ENCODE measurements at regions of chr21 and their contacts with region 1.

Region 1: GRCh38 chr21:31098576-31099005 is 60.3 kb upstream of the KRTAP19-8 start:
- DNase-seq: peak; percentile 54 to 85 (median 73)
- ATAC-seq: peak; percentile 78
- H3K4me3 ChIP-seq: no peak overlapping the region
- H3K4me3 Mint-ChIP-seq: no peak overlapping the region
- H3K27ac ChIP-seq: no peak overlapping the region
- H3K27ac Mint-ChIP-seq: no peak overlapping the region
- H3K4me1 ChIP-seq: no peaks in the 10 kb centered on the region
- H3K4me1 Mint-ChIP-seq: peaks cover 22% of the 10 kb centered on the region
- H3K27me3 ChIP-seq: no peaks in the 10 kb centered on the region
- H3K27me3 Mint-ChIP-seq: no peaks in the 10 kb centered on the region
- CTCF ChIP-seq: peak; percentile 90

Region 2: GRCh38 chr21:31064803-31065202 is 33.8 kb before region 1 on chr21:
- CTCF ChIA-PET with region 1: no interaction called
- POLR2A ChIA-PET with region 1: no interaction called
- intact Hi-C with region 1: no loop called
- DNase-seq: no peak
- ATAC-seq: no peak
- H3K4me3 ChIP-seq: no peak overlapping the region
- H3K4me3 Mint-ChIP-seq: no peak overlapping the region
- H3K27ac ChIP-seq: no peak overlapping the region
- H3K27ac Mint-ChIP-seq: no peak overlapping the region
- H3K4me1 ChIP-seq: no peaks in the 10 kb centered on the region
- H3K4me1 Mint-ChIP-seq: no peaks in the 10 kb centered on the region
- H3K27me3 ChIP-seq: no peaks in the 10 kb centered on the region
- H3K27me3 Mint-ChIP-seq: peaks cover 4% of the 10 kb centered on the region
- CTCF ChIP-seq: no peak

Region 3: GRCh38 chr21:31142600-31142999 is 44.0 kb after region 1 on chr21:
- CTCF ChIA-PET with region 1: interaction called, 13 read pairs
- POLR2A ChIA-PET with region 1: no interaction called
- intact Hi-C with region 1: loop called (anchors 1 kb)
- DNase-seq: peak in 6 of 9 experiments; percentile 41 to 65 (median 54)
- ATAC-seq: peak; percentile 86
- H3K4me3 ChIP-seq: no peak overlapping the region
- H3K4me3 Mint-ChIP-seq: no peak overlapping the region
- H3K27ac ChIP-seq: no peak overlapping the region
- H3K27ac Mint-ChIP-seq: no peak overlapping the region
- H3K4me1 ChIP-seq: peaks cover 7% of the 10 kb centered on the region
- H3K4me1 Mint-ChIP-seq: peaks cover 18% of the 10 kb centered on the region
- H3K27me3 ChIP-seq: no peaks in the 10 kb centered on the region
- H3K27me3 Mint-ChIP-seq: no peaks in the 10 kb centered on the region
- CTCF ChIP-seq: peak; percentile 15

Region 4: DNA sequence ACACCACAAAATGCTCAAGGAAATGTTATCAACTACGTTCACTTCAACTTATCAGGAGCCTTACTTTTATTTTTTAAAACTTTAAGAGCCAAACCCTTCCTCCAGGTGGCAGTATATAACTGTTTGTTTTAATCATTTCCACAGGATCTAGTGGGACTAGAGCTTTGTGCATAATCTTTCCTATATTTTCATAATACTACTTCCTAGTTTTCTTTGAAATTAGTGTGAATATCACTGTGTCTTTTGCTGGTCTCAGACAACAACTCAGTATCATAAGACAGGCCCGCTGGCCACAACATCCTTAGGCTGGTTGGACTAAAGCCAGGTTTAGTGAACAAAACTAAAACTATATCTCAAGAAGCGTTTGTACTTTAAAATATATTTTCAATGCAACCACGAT is 100.0 kb after region 1 on chr21:
- CTCF ChIA-PET with region 1: interaction called, 7 read pairs
- POLR2A ChIA-PET with region 1: interaction called, 3 read pairs
- intact Hi-C with region 1: loop called in 1 of 2 experiments (anchors 5 kb)
- DNase-seq: peak in 2 of 9 experiments; percentile 44 to 63
- ATAC-seq: peak; percentile 44
- H3K4me3 ChIP-seq: no peak overlapping the region
- H3K4me3 Mint-ChIP-seq: no peak overlapping the region
- H3K27ac ChIP-seq: no peak overlapping the region
- H3K27ac Mint-ChIP-seq: no peak overlapping the region
- H3K4me1 ChIP-seq: no peaks in the 10 kb centered on the region
- H3K4me1 Mint-ChIP-seq: peaks cover 18% of the 10 kb centered on the region
- H3K27me3 ChIP-seq: no peaks in the 10 kb centered on the region
- H3K27me3 Mint-ChIP-seq: no peaks in the 10 kb centered on the region
- CTCF ChIP-seq: peak; percentile 72